CD4-positive, alpha-beta T cell (primary cell): ENCODE measurements at regions of chr6 and their contacts with region 1.

Region 1: DNA sequence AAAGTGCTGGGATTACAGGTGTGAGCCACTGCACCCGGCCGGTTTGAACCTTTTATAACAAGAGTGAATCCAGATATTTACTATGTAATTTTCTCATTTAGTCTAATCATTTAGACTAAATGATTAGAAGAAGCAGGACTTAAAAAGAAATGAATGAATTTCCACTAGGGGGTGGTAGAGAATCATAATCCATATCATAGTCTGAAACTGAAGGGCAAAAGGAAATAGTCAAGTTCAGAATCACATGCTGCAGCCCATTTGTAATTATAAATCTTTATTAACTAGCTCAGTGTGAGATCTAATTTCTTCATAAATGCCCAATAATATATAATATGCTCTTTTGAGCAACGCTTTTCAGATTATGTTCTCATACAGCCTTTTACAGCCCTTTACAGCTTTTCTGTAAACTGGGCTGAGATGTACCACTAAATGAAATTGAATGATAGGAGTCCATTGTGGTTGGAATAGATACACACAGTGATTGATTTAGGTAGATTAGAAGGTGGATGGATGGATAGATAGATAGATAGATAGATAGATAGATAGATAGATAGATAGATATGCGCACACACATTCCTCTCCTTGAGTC is 31.8 kb downstream of the PSMB9 start:
- DNase-seq: peak in 3 of 14 experiments; percentile 83 to 85 (median 83)
- ATAC-seq: peak; percentile 65
- H3K4me3 ChIP-seq: no peak overlapping the region
- H3K4me3 Mint-ChIP-seq: no peak overlapping the region
- H3K27ac ChIP-seq: no peak overlapping the region
- H3K27ac Mint-ChIP-seq: no peak overlapping the region
- H3K4me1 ChIP-seq: no peaks in the 10 kb centered on the region
- H3K4me1 Mint-ChIP-seq: no peaks in the 10 kb centered on the region
- H3K27me3 ChIP-seq: no peaks in the 10 kb centered on the region
- H3K27me3 Mint-ChIP-seq: no peaks in the 10 kb centered on the region
- CTCF ChIP-seq: peak; percentile 73

Region 2: GRCh38 chr6:32825966-32826365 is 59.8 kb before region 1 on chr6:
- CTCF ChIA-PET with region 1: no interaction called
- POLR2A ChIA-PET with region 1: no interaction called
- intact Hi-C with region 1: no loop called
- DNase-seq: peak in 1 of 14 experiments; percentile 43
- ATAC-seq: no peak
- H3K4me3 ChIP-seq: no peak overlapping the region
- H3K4me3 Mint-ChIP-seq: no peak overlapping the region
- H3K27ac ChIP-seq: no peak overlapping the region
- H3K27ac Mint-ChIP-seq: no peak overlapping the region
- H3K4me1 ChIP-seq: no peaks in the 10 kb centered on the region
- H3K4me1 Mint-ChIP-seq: no peaks in the 10 kb centered on the region
- H3K27me3 ChIP-seq: no peaks in the 10 kb centered on the region
- H3K27me3 Mint-ChIP-seq: no peaks in the 10 kb centered on the region
- CTCF ChIP-seq: peak; percentile 26

Region 3: DNA sequence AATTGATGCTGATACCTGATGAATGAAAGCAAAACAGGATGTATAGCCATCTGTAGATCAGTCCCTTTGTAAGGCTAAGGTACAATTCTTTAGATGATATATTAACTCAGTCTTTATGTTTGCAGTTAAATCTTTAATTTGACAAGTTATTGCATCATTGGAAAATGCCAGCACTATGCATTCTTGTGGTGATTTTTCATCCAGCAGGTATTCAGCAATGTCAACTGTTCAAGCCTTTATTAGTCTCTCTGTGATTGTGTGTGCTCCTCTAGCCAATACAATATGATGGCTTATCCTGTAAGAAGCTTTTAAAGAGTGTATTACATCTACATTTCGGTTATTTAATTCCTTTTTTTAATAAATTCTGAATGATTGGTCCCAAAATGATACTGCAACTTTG is 20.7 kb after region 1 on chr6:
- CTCF ChIA-PET with region 1: no interaction called
- POLR2A ChIA-PET with region 1: no interaction called
- intact Hi-C with region 1: no loop called
- DNase-seq: no peak
- ATAC-seq: no peak
- H3K4me3 ChIP-seq: no peak overlapping the region
- H3K4me3 Mint-ChIP-seq: no peak overlapping the region
- H3K27ac ChIP-seq: no peak overlapping the region
- H3K27ac Mint-ChIP-seq: no peak overlapping the region
- H3K4me1 ChIP-seq: no peaks in the 10 kb centered on the region
- H3K4me1 Mint-ChIP-seq: no peaks in the 10 kb centered on the region
- H3K27me3 ChIP-seq: no peaks in the 10 kb centered on the region
- H3K27me3 Mint-ChIP-seq: peaks cover 10% of the 10 kb centered on the region
- CTCF ChIP-seq: no peak

Region 4: GRCh38 chr6:32933636-32934085 is 47.9 kb after region 1 on chr6:
- CTCF ChIA-PET with region 1: interaction called, 8 read pairs
- POLR2A ChIA-PET with region 1: interaction called, 6 read pairs
- intact Hi-C with region 1: loop called (anchors 1 to 2 kb)
- DNase-seq: peak; percentile 61 to 88 (median 74)
- ATAC-seq: peak; percentile 68
- H3K4me3 ChIP-seq: no peak overlapping the region
- H3K4me3 Mint-ChIP-seq: no peak overlapping the region
- H3K27ac ChIP-seq: no peak overlapping the region
- H3K27ac Mint-ChIP-seq: no peak overlapping the region
- H3K4me1 ChIP-seq: no peaks in the 10 kb centered on the region
- H3K4me1 Mint-ChIP-seq: peaks cover 6% of the 10 kb centered on the region
- H3K27me3 ChIP-seq: no peaks in the 10 kb centered on the region
- H3K27me3 Mint-ChIP-seq: no peaks in the 10 kb centered on the region
- CTCF ChIP-seq: peak; percentile 84

Region 5: DNA sequence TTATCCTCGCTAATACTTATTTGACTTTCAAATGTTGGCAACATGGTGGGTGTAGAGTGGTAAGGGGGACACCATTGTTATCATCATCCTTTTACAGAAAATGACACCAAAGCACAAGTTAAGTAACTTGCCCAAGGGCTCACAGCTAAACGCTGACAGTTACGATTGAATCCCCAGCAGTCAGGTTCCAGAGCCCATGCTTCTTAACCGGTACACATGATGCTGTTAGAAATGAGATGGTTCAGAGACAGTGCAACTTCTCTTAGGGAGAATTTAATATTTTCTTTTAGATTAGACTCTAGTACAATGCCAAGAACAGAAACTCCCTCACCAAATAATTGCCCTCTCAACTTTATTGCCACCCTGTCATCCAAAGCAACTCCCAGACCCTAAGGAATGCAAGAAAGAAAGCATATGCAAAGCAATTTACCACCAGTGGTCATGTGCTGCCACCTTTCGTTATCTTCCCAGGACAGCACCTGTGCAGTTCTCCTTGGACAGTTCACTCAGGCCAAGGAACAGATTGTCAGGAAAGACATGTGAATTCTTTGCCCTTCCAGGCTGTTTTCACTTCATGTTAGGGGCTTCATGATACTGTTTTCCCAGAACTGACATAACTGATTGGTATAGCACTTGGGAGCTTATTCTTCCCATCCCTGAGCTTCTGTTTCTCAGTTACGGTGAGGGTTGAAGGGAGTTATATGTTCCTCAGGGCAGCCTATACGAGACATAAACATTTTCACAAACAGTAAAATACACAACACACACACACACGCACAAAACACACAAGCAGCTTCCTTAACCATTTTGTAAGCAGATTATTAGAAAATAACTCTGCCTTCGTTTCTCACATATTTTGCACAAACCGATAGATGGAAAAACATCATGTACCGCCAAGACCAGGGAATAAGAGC is 62.0 kb after region 1 on chr6:
- CTCF ChIA-PET with region 1: interaction called, 15 read pairs
- POLR2A ChIA-PET with region 1: no interaction called
- intact Hi-C with region 1: loop called (anchors 1 to 2 kb)
- DNase-seq: peak in 11 of 14 experiments; percentile 19 to 79 (median 32)
- ATAC-seq: peak; percentile 33
- H3K4me3 ChIP-seq: no peak overlapping the region
- H3K4me3 Mint-ChIP-seq: no peak overlapping the region
- H3K27ac ChIP-seq: no peak overlapping the region
- H3K27ac Mint-ChIP-seq: no peak overlapping the region
- H3K4me1 ChIP-seq: peaks cover 43% of the 10 kb centered on the region
- H3K4me1 Mint-ChIP-seq: peaks cover 72% of the 10 kb centered on the region
- H3K27me3 ChIP-seq: no peaks in the 10 kb centered on the region
- H3K27me3 Mint-ChIP-seq: no peaks in the 10 kb centered on the region
- CTCF ChIP-seq: peak; percentile 77

Region 6: DNA sequence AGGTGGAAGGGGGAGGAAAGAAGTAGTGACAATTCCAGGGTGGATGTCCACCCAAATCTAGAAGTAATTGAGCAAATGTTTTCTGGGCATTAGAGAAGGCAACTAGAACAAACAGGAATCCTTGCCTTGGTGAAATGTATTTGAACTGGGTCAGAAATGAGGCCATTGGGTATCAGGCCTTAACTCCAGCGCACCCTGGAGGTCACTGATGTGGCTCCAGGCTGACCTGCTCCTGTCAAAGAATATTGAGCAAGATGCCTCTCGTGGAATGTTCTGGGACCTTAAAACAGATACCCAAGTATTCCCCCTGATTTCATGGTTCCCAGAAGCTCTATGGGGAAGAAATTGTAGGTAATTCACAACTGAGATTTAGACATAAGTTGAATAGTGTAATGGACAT is 196.9 kb after region 1 on chr6:
- CTCF ChIA-PET with region 1: no interaction called
- POLR2A ChIA-PET with region 1: no interaction called
- intact Hi-C with region 1: loop called in 1 of 2 experiments (anchors 5 kb)
- DNase-seq: peak in 3 of 14 experiments; percentile 38 to 73 (median 46)
- ATAC-seq: peak; percentile 67
- H3K4me3 ChIP-seq: no peak overlapping the region
- H3K4me3 Mint-ChIP-seq: no peak overlapping the region
- H3K27ac ChIP-seq: no peak overlapping the region
- H3K27ac Mint-ChIP-seq: no peak overlapping the region
- H3K4me1 ChIP-seq: peaks cover 14% of the 10 kb centered on the region
- H3K4me1 Mint-ChIP-seq: peaks cover 11% of the 10 kb centered on the region
- H3K27me3 ChIP-seq: no peaks in the 10 kb centered on the region
- H3K27me3 Mint-ChIP-seq: peaks cover 9% of the 10 kb centered on the region
- CTCF ChIP-seq: peak; percentile 39

Region 7: GRCh38 chr6:33204378-33205190 is 318.8 kb after region 1 on chr6 and contains the start of gene HSD17B8:
- CTCF ChIA-PET with region 1: no interaction called
- POLR2A ChIA-PET with region 1: no interaction called
- intact Hi-C with region 1: no loop called
- DNase-seq: peak; percentile 70 to 94 (median 86)
- ATAC-seq: peak; percentile 56
- H3K4me3 ChIP-seq: peak within 1 kb of the TSS; percentile 90
- H3K4me3 Mint-ChIP-seq: peak within 1 kb of the TSS; percentile 90
- H3K27ac ChIP-seq: peak within 1 kb of the TSS; percentile 56 to 65
- H3K27ac Mint-ChIP-seq: peak within 1 kb of the TSS; percentile 80
- H3K4me1 ChIP-seq: peaks cover 64% of the 10 kb centered on the region
- H3K4me1 Mint-ChIP-seq: peaks cover 71% of the 10 kb centered on the region
- H3K27me3 ChIP-seq: no peaks in the 10 kb centered on the region
- H3K27me3 Mint-ChIP-seq: no peaks in the 10 kb centered on the region
- CTCF ChIP-seq: no peak
- total RNA-seq, gene HSD17B8: 8.6 to 10.5 TPM